Endothelial cell of umbilical vein (primary cell): ENCODE measurements at regions of chr15 and their contacts with region 1.

Region 1: GRCh38 chr15:65028921-65029735 is at the start of gene MTFMT:
- DNase-seq: peak; percentile 80
- H3K4me3 ChIP-seq: peak within 1 kb of the TSS; percentile 70 to 81 (median 73)
- H3K27ac ChIP-seq: peak within 1 kb of the TSS; percentile 16
- H3K4me1 ChIP-seq: peaks cover 8% of the 10 kb centered on the region
- H3K27me3 ChIP-seq: no peaks in the 10 kb centered on the region
- CTCF ChIP-seq: no peak
- POLR2A ChIP-seq: peak; percentile 96
- total RNA-seq, gene MTFMT: 13.6 and 20.4 TPM in 2 replicates

Region 2: DNA sequence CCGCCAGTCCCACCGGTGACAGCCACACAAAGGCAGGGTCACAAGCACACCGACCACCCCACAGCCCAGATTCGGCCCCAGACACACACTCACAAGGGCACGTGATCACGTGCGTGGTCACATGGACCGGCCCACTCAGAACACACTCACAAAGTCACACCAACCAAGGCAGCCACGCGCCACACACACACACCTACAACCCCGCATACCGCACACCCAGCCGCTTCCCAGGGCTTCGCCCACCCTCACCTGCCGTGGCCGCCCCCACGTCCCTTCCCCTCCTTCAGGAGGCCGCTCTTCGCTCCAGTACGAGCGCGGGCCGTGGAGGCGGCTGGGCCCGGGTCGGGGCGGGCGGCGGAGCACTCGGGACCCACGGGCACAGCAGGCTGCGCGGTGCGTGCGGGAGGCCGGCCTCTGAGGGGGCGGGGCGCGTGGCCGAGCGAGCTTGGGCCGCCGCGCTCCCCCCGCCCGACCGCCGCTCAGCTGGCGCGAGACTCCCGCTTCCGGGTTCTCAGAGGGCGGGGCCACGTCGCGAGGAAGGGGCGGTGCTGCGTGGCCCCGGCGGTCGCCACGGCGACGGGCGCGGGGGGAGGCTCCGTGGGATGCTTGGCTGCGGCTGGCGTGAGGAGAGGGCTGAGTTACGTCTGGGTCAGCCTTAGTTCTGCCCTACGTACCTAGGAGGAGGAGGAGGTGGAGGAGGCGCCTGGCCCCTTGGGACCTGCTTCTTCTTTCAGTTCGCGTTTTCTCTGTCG is 39.5 kb before region 1 on chr15 and contains the start of gene SPG21:
- CTCF ChIA-PET with region 1: no interaction called
- POLR2A ChIA-PET with region 1: interaction called, 4 read pairs
- dilution Hi-C with region 1: no loop called
- intact Hi-C with region 1: loop called (anchors 2 kb)
- DNase-seq: peak; percentile 97
- H3K4me3 ChIP-seq: peak within 1 kb of the TSS; percentile 93 to 99 (median 94)
- H3K27ac ChIP-seq: peak within 1 kb of the TSS; percentile 97
- H3K4me1 ChIP-seq: peaks cover 27% of the 10 kb centered on the region
- H3K27me3 ChIP-seq: no peaks in the 10 kb centered on the region
- CTCF ChIP-seq: no peak
- POLR2A ChIP-seq: peak; percentile 89
- total RNA-seq, gene SPG21: 75.3 and 82.5 TPM in 2 replicates

Region 3: DNA sequence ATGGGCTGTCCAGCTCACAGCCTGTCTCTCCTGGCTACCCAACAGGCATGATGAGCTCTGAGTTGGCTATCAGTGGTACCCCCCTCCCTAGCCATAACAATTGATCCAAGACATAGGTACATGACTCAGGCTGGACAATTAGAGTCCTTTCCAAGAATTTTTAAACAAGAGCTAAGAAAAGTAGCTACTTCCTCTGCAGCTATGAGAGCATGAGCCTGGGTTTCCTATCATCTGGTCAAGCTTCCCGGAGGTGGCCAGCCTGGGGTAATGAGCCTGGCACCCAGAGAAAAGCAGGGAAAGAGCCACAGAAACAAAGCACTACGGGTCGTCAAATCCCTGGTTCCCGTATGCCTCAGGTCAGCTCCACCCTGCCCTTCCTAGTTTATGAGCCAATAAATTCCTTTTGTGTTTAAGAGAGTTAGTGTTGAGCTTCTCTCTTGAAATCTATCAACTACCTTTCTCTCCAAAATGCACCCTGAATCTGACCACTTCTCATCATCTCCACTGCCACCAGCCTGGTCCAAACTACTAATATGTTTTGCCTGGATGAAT is 13.7 kb after region 1 on chr15:
- CTCF ChIA-PET with region 1: interaction called, 16 read pairs
- POLR2A ChIA-PET with region 1: no interaction called
- dilution Hi-C with region 1: no loop called
- intact Hi-C with region 1: loop called (anchors 2 kb)
- DNase-seq: no peak
- H3K4me3 ChIP-seq: no peak overlapping the region
- H3K27ac ChIP-seq: no peak overlapping the region
- H3K4me1 ChIP-seq: no peaks in the 10 kb centered on the region
- H3K27me3 ChIP-seq: no peaks in the 10 kb centered on the region
- CTCF ChIP-seq: no peak
- POLR2A ChIP-seq: no peak

Region 4: DNA sequence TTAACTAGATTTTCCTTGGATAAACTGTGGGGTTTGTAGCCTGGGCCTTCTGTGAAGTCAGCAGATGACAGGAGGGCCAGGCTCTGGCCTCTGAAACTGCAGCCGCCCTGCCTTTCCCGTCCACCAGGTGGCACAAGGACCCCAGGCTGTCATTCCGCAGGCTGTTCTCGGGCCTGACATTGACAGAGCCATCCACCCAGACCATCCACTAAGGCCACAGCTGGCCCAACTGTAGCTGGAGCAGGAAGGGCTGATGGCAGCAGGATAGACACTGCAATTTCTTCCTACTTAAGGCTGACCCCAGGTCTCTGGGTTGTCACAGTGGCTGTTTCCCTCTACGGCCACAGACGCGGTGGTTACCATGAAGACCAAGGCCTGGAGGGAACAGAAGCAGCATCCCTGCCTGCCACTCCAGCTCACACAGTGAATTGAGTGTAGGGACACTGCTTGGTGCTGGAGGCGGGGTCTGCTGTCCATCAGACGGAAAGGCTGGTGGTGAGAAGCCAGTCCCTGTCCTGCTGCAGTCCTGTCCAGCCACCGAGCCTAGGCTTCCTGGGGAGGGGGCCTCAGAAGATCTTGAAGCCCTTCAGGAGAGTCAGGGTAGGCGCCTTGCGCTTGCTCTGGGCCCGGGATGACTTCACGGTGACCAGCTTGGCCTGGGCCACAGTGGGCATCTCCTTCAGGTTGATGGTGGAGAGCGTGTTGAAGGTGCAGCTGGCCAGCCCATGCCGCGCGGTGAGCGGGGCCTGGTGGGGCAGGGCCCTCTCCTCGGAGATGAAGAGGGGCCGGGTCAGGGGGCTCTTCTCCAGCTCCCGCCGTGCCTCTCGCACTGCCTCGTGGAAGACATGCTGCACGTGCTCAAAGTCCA is 25.4 kb after region 1 on chr15:
- CTCF ChIA-PET with region 1: interaction called, 11 read pairs
- POLR2A ChIA-PET with region 1: no interaction called
- dilution Hi-C with region 1: no loop called
- intact Hi-C with region 1: loop called (anchors 2 kb)
- DNase-seq: peak; percentile 61
- H3K4me3 ChIP-seq: no peak overlapping the region
- H3K27ac ChIP-seq: no peak overlapping the region
- H3K4me1 ChIP-seq: peaks cover 9% of the 10 kb centered on the region
- H3K27me3 ChIP-seq: no peaks in the 10 kb centered on the region
- CTCF ChIP-seq: peak; percentile 91 to 96
- POLR2A ChIP-seq: no peak

Region 5: GRCh38 chr15:65086017-65086679 is 57.0 kb after region 1 on chr15:
- CTCF ChIA-PET with region 1: interaction called, 12 read pairs
- POLR2A ChIA-PET with region 1: no interaction called
- dilution Hi-C with region 1: no loop called
- intact Hi-C with region 1: no loop called
- DNase-seq: peak; percentile 18
- H3K4me3 ChIP-seq: no peak overlapping the region
- H3K27ac ChIP-seq: no peak overlapping the region
- H3K4me1 ChIP-seq: no peaks in the 10 kb centered on the region
- H3K27me3 ChIP-seq: peaks cover 28 to 29% of the 10 kb centered on the region in 2 experiments
- CTCF ChIP-seq: peak; percentile 20 to 57
- POLR2A ChIP-seq: no peak

Region 6: GRCh38 chr15:65275728-65276126 is 246.6 kb after region 1 on chr15:
- CTCF ChIA-PET with region 1: no interaction called
- POLR2A ChIA-PET with region 1: no interaction called
- dilution Hi-C with region 1: no loop called
- intact Hi-C with region 1: loop called (anchors 1 kb)
- DNase-seq: no peak
- H3K4me3 ChIP-seq: no peak overlapping the region
- H3K27ac ChIP-seq: no peak overlapping the region
- H3K4me1 ChIP-seq: no peaks in the 10 kb centered on the region
- H3K27me3 ChIP-seq: no peaks in the 10 kb centered on the region
- CTCF ChIP-seq: no peak
- POLR2A ChIP-seq: no peak